ENCODE measurements at regions of chr6 and their contacts with region 1.

Region 1: DNA sequence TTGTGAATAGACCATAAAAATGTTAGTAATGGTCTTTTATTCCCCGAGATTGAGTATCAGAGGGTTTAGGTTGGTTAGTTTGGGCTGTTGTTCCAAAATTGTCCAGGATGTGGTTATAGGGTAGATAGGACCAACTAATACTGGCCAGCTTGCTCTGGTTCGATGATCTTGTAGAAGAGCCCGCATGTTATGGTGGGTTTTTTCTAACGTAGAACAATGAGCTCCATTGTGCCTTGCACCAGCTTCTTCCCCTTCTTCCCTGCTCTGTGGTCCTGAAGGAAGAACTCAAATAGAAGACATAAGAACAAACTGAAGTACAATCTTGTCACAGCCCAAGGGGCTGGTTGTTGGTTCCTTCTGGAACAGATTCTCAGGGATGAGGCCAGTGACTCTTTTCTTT is 70.5 kb downstream of the RREB1 start:
- DNase-seq: no peak
- ATAC-seq: no peak
- H3K4me3 Mint-ChIP-seq: no peak overlapping the region
- H3K27ac Mint-ChIP-seq: no peak overlapping the region
- H3K4me1 Mint-ChIP-seq: peaks cover 4% of the 10 kb centered on the region
- H3K27me3 Mint-ChIP-seq: no peaks in the 10 kb centered on the region
- CTCF ChIP-seq: no peak

Region 2: DNA sequence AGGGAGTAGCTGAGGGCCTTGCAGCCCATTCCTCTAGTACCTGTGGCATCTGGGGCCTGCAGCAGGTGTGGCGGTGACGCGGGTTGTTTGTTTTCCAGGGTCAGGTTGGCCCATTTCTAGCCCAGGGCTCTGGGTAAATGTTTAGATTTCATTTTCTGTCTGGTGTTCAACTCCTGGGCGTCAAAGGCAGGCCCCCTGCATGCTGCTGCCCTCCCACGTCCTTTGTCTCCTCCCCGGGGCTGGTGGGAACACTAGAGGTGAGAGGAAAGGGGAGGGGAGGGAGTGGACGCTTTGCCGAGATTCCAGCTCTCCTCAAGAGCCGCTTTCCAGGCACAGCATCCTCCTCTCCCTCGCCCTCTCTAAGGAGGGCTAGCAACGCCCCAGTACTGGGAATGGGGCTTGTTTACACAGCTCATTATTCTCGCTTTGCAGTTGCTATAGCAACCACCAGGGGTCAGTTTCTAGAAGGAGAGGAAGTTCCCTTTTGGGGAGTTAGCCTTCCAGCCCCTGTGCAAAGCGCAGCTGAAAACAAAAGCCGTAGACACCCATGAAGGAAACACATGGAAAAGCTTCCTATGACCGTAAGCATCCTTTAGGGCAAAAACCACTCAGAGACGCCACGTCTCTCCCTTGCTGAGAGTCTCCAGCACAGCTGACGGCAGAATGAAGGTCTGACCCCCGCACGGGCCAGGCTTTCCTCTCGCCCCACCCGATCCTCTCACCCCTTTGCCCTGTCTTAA is 419.2 kb before region 1 on chr6:
- CTCF ChIA-PET with region 1: no interaction called
- POLR2A ChIA-PET with region 1: interaction called, 11 read pairs
- intact Hi-C with region 1: no loop called
- DNase-seq: peak; percentile 22
- ATAC-seq: peak; percentile 88
- H3K4me3 Mint-ChIP-seq: no peak overlapping the region
- H3K27ac Mint-ChIP-seq: no peak overlapping the region
- H3K4me1 Mint-ChIP-seq: peaks cover 21% of the 10 kb centered on the region
- H3K27me3 Mint-ChIP-seq: peaks cover 9% of the 10 kb centered on the region
- CTCF ChIP-seq: no peak